ENCODE measurements at regions of chr1 and their contacts with region 1.

Region 1: DNA sequence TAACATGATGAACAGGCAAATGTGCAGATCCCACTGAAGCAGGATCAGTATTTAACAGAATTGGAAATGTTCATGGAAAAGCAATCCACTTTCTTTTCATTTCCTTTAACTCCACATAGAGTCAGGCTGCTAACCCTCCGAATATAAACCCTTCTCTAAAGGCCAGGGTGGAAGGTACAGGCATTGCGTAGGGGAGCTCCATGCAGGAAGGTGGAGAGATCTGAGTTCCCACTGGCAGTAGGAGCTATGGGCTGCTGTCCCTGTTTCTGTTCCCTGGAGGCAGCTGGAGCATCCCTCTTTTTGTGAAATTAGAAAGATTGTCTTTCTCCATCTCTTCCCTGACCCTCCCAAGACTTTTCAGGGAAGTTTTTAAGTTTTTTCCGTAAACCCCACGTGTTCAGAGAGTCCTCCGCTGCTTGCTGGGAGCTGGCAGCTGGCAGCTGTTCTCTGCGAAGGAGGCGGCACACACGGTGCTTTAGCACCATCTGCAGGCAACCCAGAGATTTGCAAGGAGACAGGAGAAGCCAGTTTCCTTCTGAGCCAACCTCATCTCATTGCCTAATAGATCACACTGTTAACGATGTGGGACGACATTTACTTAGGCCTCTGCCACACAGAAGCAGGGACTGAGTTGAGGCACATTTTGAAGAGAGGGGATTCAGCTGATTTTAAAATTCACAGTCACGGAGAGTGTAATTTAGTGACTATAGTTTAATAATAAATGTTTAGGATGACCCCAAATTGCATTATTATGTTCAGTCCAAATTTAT is 55.4 kb upstream of the HOOK1 start:
- DNase-seq: peak; percentile 84
- ATAC-seq: peak; percentile 98
- H3K4me3 Mint-ChIP-seq: peak overlapping the region; percentile 16
- H3K27ac Mint-ChIP-seq: no peak overlapping the region
- H3K4me1 Mint-ChIP-seq: no peaks in the 10 kb centered on the region
- H3K27me3 Mint-ChIP-seq: no peaks in the 10 kb centered on the region

Region 2: DNA sequence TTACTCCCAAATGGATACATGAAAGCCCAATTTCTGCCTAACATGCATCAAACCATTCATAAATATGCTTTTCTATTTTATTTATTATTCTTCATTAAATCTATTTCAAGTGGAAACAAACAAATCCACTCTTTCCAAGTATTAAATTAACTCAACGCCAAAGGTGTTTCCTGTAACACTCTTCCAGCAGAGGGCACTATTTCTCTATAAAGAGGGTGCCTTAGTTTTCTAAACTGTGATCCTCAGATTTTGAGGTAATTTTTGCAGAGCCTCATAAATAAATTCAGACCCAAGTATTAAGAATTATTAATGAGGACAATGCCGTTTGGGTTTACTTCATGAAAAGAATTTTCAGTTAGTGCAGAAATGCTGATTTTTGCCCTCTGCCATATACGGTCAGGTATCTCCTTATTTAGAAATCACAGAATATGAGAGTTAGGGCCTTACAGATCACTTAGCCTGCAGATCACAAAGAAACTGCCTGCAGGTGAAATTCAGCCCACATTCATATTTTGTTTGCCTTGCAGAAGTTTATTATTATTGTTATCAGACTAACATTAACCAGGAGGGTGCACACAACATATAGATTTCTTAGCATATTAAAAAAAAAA is 1019.4 kb before region 1 on chr1:
- CTCF ChIA-PET with region 1: interaction called, 4 read pairs
- POLR2A ChIA-PET with region 1: no interaction called
- intact Hi-C with region 1: loop called (anchors 1 kb)
- DNase-seq: no peak
- ATAC-seq: peak; percentile 44
- H3K4me3 Mint-ChIP-seq: no peak overlapping the region
- H3K27ac Mint-ChIP-seq: no peak overlapping the region
- H3K4me1 Mint-ChIP-seq: no peaks in the 10 kb centered on the region
- H3K27me3 Mint-ChIP-seq: peaks cover 2% of the 10 kb centered on the region

Region 3: GRCh38 chr1:59549903-59550302 is 209.4 kb before region 1 on chr1:
- CTCF ChIA-PET with region 1: no interaction called
- POLR2A ChIA-PET with region 1: no interaction called
- intact Hi-C with region 1: no loop called
- DNase-seq: no peak
- ATAC-seq: no peak
- H3K4me3 Mint-ChIP-seq: no peak overlapping the region
- H3K27ac Mint-ChIP-seq: no peak overlapping the region
- H3K4me1 Mint-ChIP-seq: no peaks in the 10 kb centered on the region
- H3K27me3 Mint-ChIP-seq: no peaks in the 10 kb centered on the region

Region 4: DNA sequence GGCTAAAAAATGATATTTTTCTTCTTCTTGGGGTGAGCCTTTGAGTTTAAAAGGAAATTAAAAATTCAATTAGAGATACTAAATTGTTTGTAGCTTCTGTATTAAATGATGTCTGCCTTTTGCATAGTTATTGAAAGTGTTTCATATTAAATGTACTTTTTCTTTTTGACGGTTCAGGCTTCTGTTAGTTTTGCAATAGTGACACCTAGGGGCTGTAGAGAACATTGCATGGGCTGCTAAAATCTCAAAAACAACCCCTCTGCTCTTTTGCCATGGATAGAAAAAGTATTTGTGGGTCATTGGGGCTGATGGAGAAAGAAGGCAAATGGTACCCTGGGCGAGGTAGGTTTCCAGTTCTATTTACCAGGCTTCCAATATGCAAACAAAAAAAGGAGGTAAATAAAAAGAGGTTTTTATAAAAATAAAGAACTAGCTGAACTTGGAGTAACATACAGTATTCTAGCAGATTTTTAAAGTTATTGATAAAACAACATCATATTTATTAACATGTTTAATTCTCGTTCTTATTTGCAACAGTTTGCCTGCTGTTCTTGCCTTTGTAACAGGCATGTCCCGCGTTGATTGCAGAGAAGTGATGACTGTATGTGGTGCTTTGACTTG is 60.0 kb before region 1 on chr1:
- CTCF ChIA-PET with region 1: interaction called, 22 read pairs
- POLR2A ChIA-PET with region 1: no interaction called
- intact Hi-C with region 1: loop called in 1 of 2 experiments (anchors 1 kb)
- DNase-seq: peak; percentile 12
- ATAC-seq: peak; percentile 33
- H3K4me3 Mint-ChIP-seq: no peak overlapping the region
- H3K27ac Mint-ChIP-seq: no peak overlapping the region
- H3K4me1 Mint-ChIP-seq: peaks cover 21% of the 10 kb centered on the region
- H3K27me3 Mint-ChIP-seq: no peaks in the 10 kb centered on the region

Region 5: DNA sequence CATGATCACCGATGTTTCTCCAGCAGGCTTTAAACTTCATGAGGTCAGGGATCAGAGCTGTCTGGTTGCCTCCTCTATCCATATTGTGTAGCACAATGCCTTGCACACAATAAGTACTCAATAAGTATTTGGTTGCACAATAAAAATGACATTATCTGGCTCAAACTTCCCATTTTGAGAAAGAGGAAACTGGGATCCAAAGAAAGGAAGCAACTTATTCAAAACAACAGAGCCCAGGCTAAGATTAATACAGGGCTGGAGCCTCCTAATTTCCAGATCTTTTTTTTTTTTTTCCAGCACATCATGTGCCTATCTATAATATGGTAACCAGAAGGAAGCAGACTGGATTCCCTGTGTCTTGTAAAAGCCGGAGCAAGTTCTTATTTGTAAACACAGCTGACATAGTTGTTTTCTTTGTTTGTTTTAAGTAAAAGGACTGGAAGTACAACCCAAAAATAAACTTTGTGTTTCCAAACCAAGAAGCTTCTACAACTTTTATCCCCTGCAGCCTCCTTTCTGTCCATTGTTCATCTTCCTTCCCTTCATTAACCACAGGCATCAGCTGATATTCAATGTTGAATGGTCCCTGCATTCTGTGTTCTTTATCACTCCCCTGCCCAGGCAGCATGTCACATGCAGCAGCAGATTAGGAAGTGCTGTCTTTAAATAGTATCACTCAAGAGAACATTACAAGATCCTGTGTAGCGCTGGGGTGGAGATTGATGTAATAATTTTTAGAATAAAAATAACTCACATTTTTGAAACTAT is 15.8 kb before region 1 on chr1:
- CTCF ChIA-PET with region 1: interaction called, 10 read pairs
- POLR2A ChIA-PET with region 1: no interaction called
- intact Hi-C with region 1: no loop called
- DNase-seq: no peak
- ATAC-seq: no peak
- H3K4me3 Mint-ChIP-seq: no peak overlapping the region
- H3K27ac Mint-ChIP-seq: no peak overlapping the region
- H3K4me1 Mint-ChIP-seq: no peaks in the 10 kb centered on the region
- H3K27me3 Mint-ChIP-seq: no peaks in the 10 kb centered on the region

Region 6: GRCh38 chr1:59771361-59771760 is 12.0 kb after region 1 on chr1:
- CTCF ChIA-PET with region 1: interaction called, 11 read pairs
- POLR2A ChIA-PET with region 1: no interaction called
- intact Hi-C with region 1: no loop called
- DNase-seq: no peak
- ATAC-seq: no peak
- H3K4me3 Mint-ChIP-seq: no peak overlapping the region
- H3K27ac Mint-ChIP-seq: no peak overlapping the region
- H3K4me1 Mint-ChIP-seq: no peaks in the 10 kb centered on the region
- H3K27me3 Mint-ChIP-seq: peaks cover 2% of the 10 kb centered on the region